Left cardiac atrium (tissue), 4 donors: ENCODE measurements at regions of chr11 and their contacts with region 1.

Region 1: GRCh38 chr11:122101625-122102291 is 14.3 kb downstream of the BLID start:
- DNase-seq: peak; percentile 61
- ATAC-seq: peak; percentile 77 to 90

Region 2: DNA sequence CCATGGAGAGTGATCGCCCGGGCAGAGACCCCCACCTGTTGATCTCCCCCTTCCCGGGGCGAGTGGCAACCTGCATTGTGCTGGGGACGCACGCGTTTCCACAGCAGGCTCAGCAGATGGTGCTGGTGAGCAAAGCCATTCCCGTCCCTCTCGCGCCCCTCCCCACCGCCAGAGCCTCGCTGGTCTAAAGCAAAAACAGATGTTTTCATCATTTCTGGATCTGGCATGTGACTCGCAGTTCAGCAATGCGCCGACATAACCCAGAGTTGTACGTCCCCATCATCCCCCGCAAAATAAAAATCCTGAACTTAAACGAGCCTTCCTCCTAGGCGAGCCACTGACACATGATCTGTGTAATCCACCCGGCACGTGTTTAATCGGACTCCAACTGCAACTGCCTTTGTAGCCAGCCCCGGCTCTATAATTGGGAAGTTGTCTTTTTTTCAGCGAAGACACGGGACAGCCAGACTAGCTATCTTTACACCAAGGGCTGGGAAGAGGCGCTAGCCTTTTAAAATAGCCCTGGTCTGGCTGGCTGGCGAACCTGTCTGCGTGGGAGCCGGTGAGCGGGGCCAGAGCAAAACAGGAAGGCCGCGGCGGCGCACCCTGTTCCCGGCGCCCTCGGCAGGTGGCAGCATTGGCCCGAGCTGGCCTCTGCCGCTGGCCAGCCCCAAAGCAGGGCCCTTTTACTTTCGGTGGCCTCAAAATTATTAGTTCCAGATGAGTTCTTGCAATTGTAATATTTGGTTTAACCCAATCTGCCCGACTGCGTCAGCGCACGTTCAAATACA is 446.0 kb before region 1 on chr11:
- intact Hi-C with region 1: loop called (anchors 2 to 5 kb)
- DNase-seq: peak; percentile 88
- ATAC-seq: peak; percentile 95 to 96

Region 3: DNA sequence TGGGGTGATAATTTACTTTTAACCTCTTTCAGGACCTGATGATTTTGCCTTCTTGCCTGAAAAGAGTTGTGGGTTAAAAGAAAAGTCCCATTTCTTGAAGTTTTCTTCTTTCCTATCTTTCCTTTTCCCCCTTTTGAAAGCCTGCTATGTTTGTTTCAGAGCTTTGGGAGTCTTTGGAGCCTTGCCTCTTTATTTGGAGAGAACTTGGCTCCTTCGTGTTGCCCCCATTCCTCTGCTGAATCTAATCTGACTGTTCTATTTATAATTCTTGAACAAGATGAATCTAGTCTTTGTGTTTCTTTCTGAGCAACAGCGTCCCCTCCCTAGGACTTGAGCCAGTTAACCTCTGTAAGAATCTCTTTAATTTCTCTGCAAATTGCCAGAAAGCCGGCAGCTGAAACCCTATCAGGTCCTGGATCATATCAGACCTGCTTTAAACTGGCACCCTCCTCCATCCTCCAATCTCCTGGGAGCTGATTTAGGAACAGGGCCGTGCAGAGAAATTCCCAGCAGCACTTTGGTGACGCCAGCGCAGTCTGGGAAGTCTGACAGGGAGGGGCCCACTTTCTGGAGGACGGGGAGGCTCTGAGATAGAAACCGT is 359.9 kb before region 1 on chr11:
- intact Hi-C with region 1: loop called in 1 of 2 experiments (anchors 5 kb)
- DNase-seq: peak; percentile 85
- ATAC-seq: peak; percentile 95 to 97

Region 4: GRCh38 chr11:121909596-121909995 is 192.2 kb before region 1 on chr11:
- intact Hi-C with region 1: no loop called
- DNase-seq: no peak
- ATAC-seq: no peak

Region 5: GRCh38 chr11:122253589-122254231 is 152.0 kb after region 1 on chr11:
- intact Hi-C with region 1: no loop called
- DNase-seq: no peak
- ATAC-seq: peak; percentile 47 to 76